Adrenal gland (tissue), 19 donors: ENCODE measurements at regions of chr2 and their contacts with region 1.

Region 1: DNA sequence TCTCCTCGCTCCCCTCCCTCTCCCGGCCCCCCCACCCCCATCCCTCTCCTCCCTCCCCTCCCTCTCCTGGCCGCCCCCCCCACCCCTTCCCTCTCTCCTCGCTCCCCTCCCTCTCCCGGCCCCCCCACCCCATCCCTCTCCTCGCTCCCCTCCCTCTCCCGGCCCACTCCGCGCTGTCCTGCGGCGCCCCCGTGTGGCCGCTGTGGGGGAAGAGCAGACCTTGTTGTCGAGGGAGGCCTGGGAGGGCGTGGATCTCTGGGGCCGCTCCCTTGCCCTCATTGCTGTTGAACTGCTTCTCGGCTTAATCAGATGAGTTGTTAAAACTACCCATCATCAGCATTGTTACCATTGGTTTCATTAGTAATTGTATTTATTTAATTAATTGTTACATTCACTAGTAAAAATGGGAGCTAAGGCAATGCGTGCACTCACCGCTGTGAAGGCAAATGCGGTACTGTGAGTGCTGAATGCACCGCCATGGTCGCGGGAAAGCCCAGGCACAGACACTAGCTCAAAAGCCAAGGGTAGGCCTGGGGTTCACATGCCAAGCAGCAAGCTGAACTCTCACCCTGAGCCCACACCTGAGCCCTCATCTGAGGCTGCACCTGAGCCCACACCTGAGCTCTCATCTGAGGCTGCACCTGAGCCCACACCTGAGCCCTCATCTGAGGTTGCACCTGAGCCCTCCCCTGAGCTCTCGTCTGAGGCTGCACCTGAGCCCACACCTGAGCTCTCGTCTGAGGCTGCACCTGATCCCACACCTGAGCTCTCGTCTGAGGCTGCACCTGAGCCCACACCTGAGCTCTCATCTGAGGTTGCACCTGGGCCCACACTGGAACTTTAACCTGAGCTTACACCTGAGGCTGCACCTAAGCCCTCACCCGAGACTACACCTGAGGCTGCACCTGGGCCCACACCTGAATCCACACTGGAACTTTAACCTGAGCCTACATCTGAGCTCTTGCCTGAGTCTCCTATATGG is 8.8 kb downstream of the RTP5 start:
- DNase-seq: peak; percentile 60 to 75 (median 72)
- H3K4me3 ChIP-seq: no peak overlapping the region
- H3K27ac ChIP-seq: no peak overlapping the region
- H3K4me1 ChIP-seq: peaks cover 0 to 9% of the 10 kb centered on the region in 2 donors
- H3K27me3 ChIP-seq: no peaks in the 10 kb centered on the region
- CTCF ChIP-seq: peak; percentile 43 to 77 (median 53)
- POLR2A ChIP-seq: no peak

Region 2: DNA sequence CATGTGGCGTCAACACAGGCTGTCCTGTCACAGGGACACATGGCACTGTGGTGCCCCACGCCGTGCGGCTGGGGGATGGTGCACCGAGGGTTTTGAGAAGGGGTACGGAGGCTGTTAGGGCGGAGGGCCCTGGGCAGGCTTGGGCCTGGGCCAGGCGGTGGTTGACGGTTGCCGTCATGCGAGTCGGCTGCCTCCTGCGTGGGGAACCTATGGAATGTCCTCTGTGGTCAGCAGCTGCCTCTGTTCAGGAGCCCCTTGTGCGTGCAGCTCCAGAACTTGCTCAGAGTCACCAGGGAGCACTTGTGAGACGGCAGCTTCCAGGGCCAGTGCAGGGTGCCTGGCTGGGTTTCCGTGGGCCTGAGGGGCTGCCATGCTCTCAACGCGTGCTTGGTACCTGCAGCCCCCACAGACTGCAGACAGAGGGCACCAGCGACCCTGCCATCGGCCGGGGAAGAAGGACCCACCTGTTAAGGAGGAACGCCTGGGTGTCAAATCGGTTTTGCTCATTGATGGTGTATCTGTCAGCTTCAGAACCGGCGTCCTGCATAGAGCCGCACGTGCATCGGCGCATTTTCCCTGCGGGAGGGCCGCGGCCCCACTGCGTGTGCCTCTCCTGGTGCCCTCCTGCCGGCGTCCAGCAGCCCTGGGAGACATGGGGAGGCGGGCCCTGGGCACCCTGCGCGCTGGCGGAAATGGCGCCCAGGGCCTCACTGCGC is 153.9 kb before region 1 on chr2:
- intact Hi-C with region 1: loop called in 1 of 2 experiments (anchors 10 kb)
- DNase-seq: no peak
- H3K4me3 ChIP-seq: no peak overlapping the region
- H3K27ac ChIP-seq: no peak overlapping the region
- H3K4me1 ChIP-seq: no peaks in the 10 kb centered on the region
- H3K27me3 ChIP-seq: no peaks in the 10 kb centered on the region
- CTCF ChIP-seq: peak in 1 of 6 experiments; percentile 14
- POLR2A ChIP-seq: no peak

Region 3: GRCh38 chr2:241734467-241735208 is 143.6 kb before region 1 on chr2 and contains the start of gene D2HGDH:
- intact Hi-C with region 1: loop called (anchors 10 kb)
- DNase-seq: peak; percentile 89 to 95 (median 95)
- H3K4me3 ChIP-seq: peak within 1 kb of the TSS; percentile 66 to 78 (median 70)
- H3K27ac ChIP-seq: peak within 1 kb of the TSS; percentile 60 to 94 (median 82)
- H3K4me1 ChIP-seq: peaks cover 0 to 11% of the 10 kb centered on the region in 2 donors
- H3K27me3 ChIP-seq: no peaks in the 10 kb centered on the region
- CTCF ChIP-seq: no peak
- POLR2A ChIP-seq: peak; percentile 71 to 73
- total RNA-seq, gene D2HGDH: 11.8 to 67.5 (median 36.2) TPM